ENCODE measurements at regions of chr20 and their contacts with region 1.

Region 1: GRCh38 chr20:31698803-31699718 is 23.6 kb downstream of the BCL2L1 start:
- DNase-seq: peak; percentile 33
- H3K4me3 Mint-ChIP-seq: peak overlapping the region; percentile 75
- H3K27ac Mint-ChIP-seq: peak overlapping the region; percentile 87
- H3K4me1 Mint-ChIP-seq: peaks cover 75% of the 10 kb centered on the region
- H3K27me3 Mint-ChIP-seq: no peaks in the 10 kb centered on the region

Region 2: DNA sequence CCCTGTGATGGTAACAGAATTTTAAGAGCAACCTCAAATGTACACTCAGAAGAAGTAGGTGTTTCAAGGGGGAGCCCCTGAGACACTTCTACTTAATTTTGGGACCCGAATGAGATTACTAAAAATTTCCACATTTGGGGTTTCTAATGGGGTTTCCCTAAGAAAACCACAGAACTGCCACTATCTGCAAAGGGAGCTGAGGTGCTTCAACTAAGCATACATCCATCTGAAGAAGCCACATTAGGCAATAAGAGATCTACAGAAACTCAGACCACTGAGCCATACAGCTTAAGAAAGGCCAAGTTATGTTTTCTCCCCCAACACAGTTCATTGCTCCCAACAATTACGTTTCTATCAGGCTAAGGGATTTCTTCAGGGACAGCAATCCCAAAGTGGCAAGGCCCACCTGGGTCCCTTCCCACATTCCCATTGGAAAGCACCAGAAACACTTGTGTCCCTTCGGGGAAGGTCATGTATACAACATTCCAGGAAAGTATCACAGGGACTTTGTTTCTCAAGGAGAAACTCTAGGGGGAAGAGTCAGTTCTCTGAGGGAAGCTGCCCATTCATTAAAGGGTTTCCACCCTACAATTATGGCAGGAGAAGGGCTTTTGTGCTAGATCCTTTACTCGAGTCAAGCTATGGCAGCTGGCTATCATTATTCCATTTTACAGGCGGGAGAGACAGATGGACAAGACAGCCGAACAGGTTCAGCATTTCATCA is 18.6 kb after region 1 on chr20:
- intact Hi-C with region 1: loop called (anchors 1 kb)
- DNase-seq: peak; percentile 36
- H3K4me3 Mint-ChIP-seq: peak overlapping the region; percentile 97
- H3K27ac Mint-ChIP-seq: peak overlapping the region; percentile 94
- H3K4me1 Mint-ChIP-seq: peaks cover 54% of the 10 kb centered on the region
- H3K27me3 Mint-ChIP-seq: no peaks in the 10 kb centered on the region